Pancreas (tissue), 10 donors: ENCODE measurements at regions of chrX and their contacts with region 1.

Region 1: DNA sequence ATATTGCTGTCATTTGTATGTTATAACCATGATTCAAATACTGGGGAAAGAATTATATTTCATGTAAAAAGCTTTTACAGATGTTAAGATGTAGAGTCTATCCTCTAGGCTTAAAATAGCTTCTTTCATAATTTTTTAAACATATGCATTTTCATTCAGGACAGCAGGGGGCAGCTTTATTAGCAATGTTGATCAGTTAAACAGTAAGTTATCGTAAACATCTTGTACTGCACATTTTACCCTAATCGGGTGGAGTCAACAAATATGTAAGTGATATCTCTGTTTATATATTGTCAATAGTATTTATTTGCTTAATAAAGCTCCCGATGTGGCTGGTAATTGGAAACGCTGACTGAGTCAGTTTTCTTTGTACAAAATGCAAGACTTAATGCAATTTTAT is 142.5 kb upstream of the MED14 start:
- DNase-seq: no peak
- ATAC-seq: peak in 3 of 4 donors; percentile 51 to 69 (median 61)
- H3K4me3 ChIP-seq: no peak overlapping the region
- H3K27ac ChIP-seq: no peak overlapping the region
- H3K4me1 ChIP-seq: no peaks in the 10 kb centered on the region
- H3K27me3 ChIP-seq: peaks cover 0 to 9% (median 0%) of the 10 kb centered on the region in 4 donors
- CTCF ChIP-seq: peak in 2 of 4 donors; percentile 27 to 38

Region 2: GRCh38 chrX:40392599-40392998 is 485.3 kb before region 1 on chrX:
- intact Hi-C with region 1: no loop called
- DNase-seq: no peak
- ATAC-seq: no peak
- H3K4me3 ChIP-seq: no peak overlapping the region
- H3K27ac ChIP-seq: no peak overlapping the region
- H3K4me1 ChIP-seq: no peaks in the 10 kb centered on the region
- H3K27me3 ChIP-seq: no peaks in the 10 kb centered on the region
- CTCF ChIP-seq: no peak

Region 3: DNA sequence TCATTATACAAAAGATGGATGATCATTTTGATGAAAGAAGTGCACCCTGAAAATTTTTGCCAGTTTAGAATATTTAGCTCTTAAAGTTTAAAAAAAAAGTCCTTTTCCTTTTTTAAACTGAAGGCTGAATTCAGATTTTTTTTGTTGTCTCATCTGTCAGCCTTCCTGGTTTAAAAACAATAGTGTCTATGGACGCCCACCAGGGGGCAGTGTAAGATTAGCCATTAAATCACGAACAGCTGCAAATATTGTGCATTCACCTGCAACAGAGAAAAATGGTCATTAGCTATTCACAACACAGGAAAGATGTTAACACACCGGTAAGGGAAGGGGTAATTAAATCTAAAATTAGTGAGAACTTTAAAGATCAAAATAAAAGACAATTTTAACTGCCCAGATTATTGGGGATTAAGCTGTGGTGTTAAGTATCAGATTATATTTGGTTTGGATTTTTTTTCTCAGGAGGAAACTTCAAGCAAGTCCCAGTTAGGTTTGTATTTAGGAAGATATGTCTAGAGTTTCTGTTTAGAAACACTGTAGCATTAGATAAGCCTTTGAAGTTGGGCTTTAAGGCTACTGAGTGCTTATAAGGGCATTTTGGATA is 226.2 kb before region 1 on chrX:
- intact Hi-C with region 1: no loop called
- DNase-seq: peak in 5 of 6 donors; percentile 43 to 78 (median 66)
- ATAC-seq: peak in 2 of 4 donors; percentile 48 to 53
- H3K4me3 ChIP-seq: no peak overlapping the region
- H3K27ac ChIP-seq: no peak overlapping the region
- H3K4me1 ChIP-seq: no peaks in the 10 kb centered on the region
- H3K27me3 ChIP-seq: no peaks in the 10 kb centered on the region
- CTCF ChIP-seq: peak; percentile 49 to 85 (median 68)

Region 4: DNA sequence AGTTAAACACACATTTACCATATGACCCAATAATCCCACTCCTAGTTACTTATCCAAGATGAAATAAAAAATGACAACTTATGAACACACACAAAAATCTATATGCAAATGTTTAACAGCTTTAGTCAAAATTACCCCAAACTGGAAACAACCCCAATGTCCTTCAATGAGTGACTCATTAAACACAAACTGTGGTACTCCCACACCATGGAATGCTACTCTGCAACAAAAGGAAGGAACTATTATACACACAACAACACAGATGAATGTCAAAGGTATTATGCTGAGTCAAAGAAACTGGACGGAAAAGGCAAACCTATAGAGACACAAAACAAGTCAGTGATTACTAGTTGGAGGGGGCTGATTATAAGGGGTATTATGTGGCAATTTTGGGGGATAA is 183.1 kb before region 1 on chrX:
- intact Hi-C with region 1: no loop called
- DNase-seq: no peak
- ATAC-seq: no peak
- H3K4me3 ChIP-seq: no peak overlapping the region
- H3K27ac ChIP-seq: no peak overlapping the region
- H3K4me1 ChIP-seq: no peaks in the 10 kb centered on the region
- H3K27me3 ChIP-seq: peaks cover 0 to 9% (median 0%) of the 10 kb centered on the region in 4 donors
- CTCF ChIP-seq: no peak

Region 5: GRCh38 chrX:41116948-41117347 is 239.1 kb after region 1 on chrX:
- intact Hi-C with region 1: loop called in 1 of 3 experiments (anchors 10 kb)
- DNase-seq: no peak
- ATAC-seq: peak in 3 of 4 donors; percentile 30 to 60 (median 49)
- H3K4me3 ChIP-seq: no peak overlapping the region
- H3K27ac ChIP-seq: no peak overlapping the region
- H3K4me1 ChIP-seq: peaks cover 0 to 12% (median 4%) of the 10 kb centered on the region in 3 donors
- H3K27me3 ChIP-seq: no peaks in the 10 kb centered on the region
- CTCF ChIP-seq: no peak